Heart right ventricle (tissue), 16 donors: ENCODE measurements at regions of chr5 and their contacts with region 1.

Region 1: GRCh38 chr5:170225326-170226128 is 7.3 kb upstream of the C5orf58 start:
- DNase-seq: peak; percentile 58 to 83
- ATAC-seq: peak; percentile 35 to 78 (median 71)
- H3K4me3 ChIP-seq: no peak overlapping the region
- H3K27ac ChIP-seq: no peak overlapping the region
- H3K4me1 ChIP-seq: peaks cover 0 to 28% (median 7%) of the 10 kb centered on the region in 9 donors
- H3K27me3 ChIP-seq: no peaks in the 10 kb centered on the region
- CTCF ChIP-seq: peak; percentile 55 to 87 (median 78)

Region 2: DNA sequence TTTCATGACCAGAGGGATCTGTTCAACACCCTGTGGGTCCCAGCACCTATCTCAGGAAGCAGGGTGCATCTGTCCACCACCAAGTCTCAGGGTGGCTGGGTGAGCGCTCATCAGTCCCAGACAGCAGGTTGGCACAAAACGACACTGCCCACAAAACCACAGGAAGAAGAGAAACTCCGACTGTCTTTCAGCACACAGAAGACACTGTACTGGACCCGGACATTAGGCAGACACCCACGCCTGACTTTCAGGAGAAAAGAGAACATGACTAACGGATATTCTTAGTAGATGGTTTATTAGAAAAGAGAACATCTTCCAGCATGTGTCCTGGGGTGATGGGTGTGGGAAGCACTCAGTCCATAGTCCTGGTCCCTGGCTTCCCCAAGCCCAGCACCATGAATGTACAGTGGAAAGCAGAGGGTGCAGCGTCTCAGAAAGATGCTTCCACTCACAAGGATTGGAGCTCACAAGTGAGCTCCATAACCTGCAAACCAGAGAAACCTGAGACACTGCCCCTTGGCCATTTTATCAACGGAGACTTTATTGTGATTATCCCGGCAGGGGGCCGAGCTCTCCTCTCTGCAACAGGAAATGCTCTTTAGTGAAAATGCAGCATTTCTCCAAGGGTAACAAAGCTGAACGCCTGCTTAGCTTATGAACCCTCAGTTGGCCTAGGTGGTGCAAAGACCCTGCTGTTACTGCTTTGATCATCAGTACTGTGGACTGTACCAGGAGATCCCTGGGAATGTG is 107.8 kb after region 1 on chr5:
- intact Hi-C with region 1: loop called in 1 of 10 experiments (anchors 5 kb)
- DNase-seq: no peak
- ATAC-seq: peak in 2 of 8 donors; percentile 9 to 15
- H3K4me3 ChIP-seq: peak overlapping the region in 1 of 10 donors; percentile 3
- H3K27ac ChIP-seq: peak overlapping the region in 3 of 10 donors; percentile 75 to 92 (median 81)
- H3K4me1 ChIP-seq: peaks cover 6 to 93% (median 16%) of the 10 kb centered on the region in 9 donors
- H3K27me3 ChIP-seq: no peaks in the 10 kb centered on the region
- CTCF ChIP-seq: no peak

Region 3: GRCh38 chr5:170357955-170358444 is 132.5 kb after region 1 on chr5:
- intact Hi-C with region 1: loop called in 1 of 10 experiments (anchors 5 kb)
- DNase-seq: peak; percentile 50 to 62
- ATAC-seq: peak in 7 of 8 donors; percentile 37 to 61 (median 43)
- H3K4me3 ChIP-seq: no peak overlapping the region
- H3K27ac ChIP-seq: peak overlapping the region in 5 of 10 donors; percentile 17 to 84 (median 43)
- H3K4me1 ChIP-seq: peaks cover 15 to 95% (median 71%) of the 10 kb centered on the region in 9 donors
- H3K27me3 ChIP-seq: peaks cover 0 to 8% (median 0%) of the 10 kb centered on the region in 7 donors
- CTCF ChIP-seq: no peak

Region 4: GRCh38 chr5:170623576-170624181 is 398.2 kb after region 1 on chr5:
- intact Hi-C with region 1: loop called in 3 of 10 experiments (anchors 10 kb)
- DNase-seq: peak in 1 of 2 donors; percentile 42
- ATAC-seq: peak in 5 of 8 donors; percentile 55 to 69 (median 61)
- H3K4me3 ChIP-seq: no peak overlapping the region
- H3K27ac ChIP-seq: no peak overlapping the region
- H3K4me1 ChIP-seq: no peaks in the 10 kb centered on the region
- H3K27me3 ChIP-seq: no peaks in the 10 kb centered on the region
- CTCF ChIP-seq: peak; percentile 8 to 71 (median 63)

Region 5: DNA sequence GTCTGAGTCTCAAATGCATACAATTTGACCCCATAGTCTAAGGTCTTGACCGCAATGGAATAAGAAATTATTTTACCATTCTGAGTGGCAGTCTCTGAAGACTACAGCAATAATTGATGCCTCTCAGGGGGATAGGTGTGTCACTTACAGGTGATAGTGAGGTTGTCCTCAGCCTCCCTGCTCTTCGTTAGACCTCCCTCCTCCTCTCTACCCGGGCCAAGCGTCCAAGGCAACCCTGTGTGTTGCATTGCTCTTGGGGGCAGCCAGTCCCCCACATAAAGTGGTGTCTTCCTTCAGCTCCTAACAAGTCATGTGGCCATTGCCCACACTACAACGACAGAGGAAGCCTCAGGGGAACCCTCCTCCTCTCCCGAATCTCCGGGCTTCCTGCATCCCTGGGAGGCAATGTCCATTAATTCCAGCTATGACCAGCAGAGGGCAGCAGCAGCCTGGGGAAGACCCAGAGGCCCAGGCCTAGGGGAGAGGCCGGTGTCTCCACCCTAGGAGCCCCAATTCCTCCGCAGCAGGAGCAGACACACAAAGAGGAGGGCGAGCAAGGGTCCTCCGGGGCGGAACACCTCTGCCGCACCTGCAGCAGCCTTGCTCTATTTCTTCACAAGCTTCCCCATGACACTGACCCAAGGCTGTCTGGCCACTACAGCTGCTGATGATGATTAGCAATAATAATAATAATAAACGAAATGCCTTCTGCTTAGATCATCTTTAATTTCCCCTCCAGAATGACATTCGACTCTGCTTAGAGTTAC is 413.1 kb after region 1 on chr5:
- intact Hi-C with region 1: loop called in 2 of 10 experiments (anchors 5 to 10 kb)
- DNase-seq: peak; percentile 61 to 69
- ATAC-seq: peak; percentile 46 to 76 (median 64)
- H3K4me3 ChIP-seq: no peak overlapping the region
- H3K27ac ChIP-seq: no peak overlapping the region
- H3K4me1 ChIP-seq: peaks cover 0 to 26% (median 11%) of the 10 kb centered on the region in 9 donors
- H3K27me3 ChIP-seq: no peaks in the 10 kb centered on the region
- CTCF ChIP-seq: peak; percentile 71 to 94 (median 87)